ENCODE measurements at regions of chr11 and their contacts with region 1.

Region 1: DNA sequence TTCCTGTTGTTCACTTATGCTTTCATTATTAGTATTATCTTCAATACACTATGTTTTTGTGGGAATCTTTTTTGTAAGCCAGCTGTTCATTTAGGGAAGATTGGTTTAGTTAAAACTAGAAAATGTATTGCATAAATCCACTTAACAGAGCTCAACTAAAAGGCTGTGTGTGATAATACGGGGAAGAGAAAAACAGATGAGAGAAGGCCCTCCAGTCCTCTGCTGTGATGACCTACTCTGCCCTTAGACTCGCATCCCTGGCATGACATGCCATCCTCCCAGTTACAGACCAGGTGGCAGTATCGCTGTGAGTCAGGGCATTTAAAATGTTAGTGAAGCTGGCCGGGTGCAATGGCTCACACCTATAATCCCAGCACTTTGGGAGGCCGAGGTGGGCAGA is 173.4 kb upstream of the TTC12 start:
- DNase-seq: no peak
- ATAC-seq: no peak

Region 2: GRCh38 chr11:113045146-113045545 is 95.9 kb before region 1 on chr11:
- intact Hi-C with region 1: no loop called
- DNase-seq: no peak
- ATAC-seq: no peak

Region 3: GRCh38 chr11:113184498-113184897 is 43.5 kb after region 1 on chr11:
- intact Hi-C with region 1: loop called in 1 of 2 experiments (anchors 2 kb)
- DNase-seq: no peak
- ATAC-seq: no peak